CD14-positive monocyte (primary cell): ENCODE measurements at regions of chr5 and their contacts with region 1.

Region 1: DNA sequence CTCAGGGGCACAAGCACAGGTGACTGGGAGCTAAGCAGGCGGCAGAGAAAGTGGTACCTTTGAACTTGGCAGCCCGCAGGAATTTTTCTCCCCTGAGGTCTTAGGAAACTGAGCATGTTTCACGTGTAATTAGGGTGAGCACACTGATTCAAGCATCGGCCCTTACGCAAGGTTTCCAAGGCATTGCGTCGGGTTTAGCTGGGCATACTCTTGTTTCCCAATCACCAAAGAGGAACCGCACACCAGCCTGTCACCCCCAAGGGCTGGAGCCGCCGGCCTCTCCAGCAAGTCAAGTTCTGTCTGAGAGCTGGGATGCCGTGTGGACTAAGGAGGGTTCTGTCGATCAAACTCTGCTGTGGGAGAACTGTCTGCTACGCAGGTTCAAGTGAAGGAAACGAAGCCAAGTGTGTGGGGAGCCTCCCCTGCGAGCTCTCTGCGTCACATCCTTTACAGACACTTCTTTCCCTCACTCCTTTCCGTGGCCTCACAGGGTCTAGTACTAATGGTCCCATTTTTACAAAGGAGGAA is 53.0 kb downstream of the ERGIC1 start:
- DNase-seq: peak; percentile 98 to 100 (median 100)
- H3K4me3 ChIP-seq: peak overlapping the region in 1 of 3 experiments; percentile 22
- H3K4me3 Mint-ChIP-seq: peak overlapping the region; percentile 67 to 73
- H3K27ac ChIP-seq: peak overlapping the region; percentile 98 to 100
- H3K27ac Mint-ChIP-seq: peak overlapping the region; percentile 99 to 100 (median 100)
- H3K4me1 ChIP-seq: peaks cover 53 to 54% of the 10 kb centered on the region in 2 donors
- H3K4me1 Mint-ChIP-seq: peaks cover 57% of the 10 kb centered on the region
- H3K27me3 ChIP-seq: no peaks in the 10 kb centered on the region
- H3K27me3 Mint-ChIP-seq: peaks cover 0 to 7% (median 2%) of the 10 kb centered on the region in 3 donors
- CTCF ChIP-seq: no peak

Region 2: GRCh38 chr5:172764849-172765765 is 121.9 kb before region 1 on chr5:
- intact Hi-C with region 1: loop called (anchors 2 kb)
- DNase-seq: peak; percentile 100
- H3K4me3 ChIP-seq: peak overlapping the region; percentile 34 to 95 (median 42)
- H3K4me3 Mint-ChIP-seq: peak overlapping the region; percentile 94 to 100
- H3K27ac ChIP-seq: peak overlapping the region; percentile 89 to 100
- H3K27ac Mint-ChIP-seq: peak overlapping the region; percentile 94 to 99 (median 98)
- H3K4me1 ChIP-seq: peaks cover 38 to 44% of the 10 kb centered on the region in 2 donors
- H3K4me1 Mint-ChIP-seq: peaks cover 41% of the 10 kb centered on the region
- H3K27me3 ChIP-seq: no peaks in the 10 kb centered on the region
- H3K27me3 Mint-ChIP-seq: peaks cover 3 to 28% (median 14%) of the 10 kb centered on the region in 3 donors
- CTCF ChIP-seq: no peak

Region 3: DNA sequence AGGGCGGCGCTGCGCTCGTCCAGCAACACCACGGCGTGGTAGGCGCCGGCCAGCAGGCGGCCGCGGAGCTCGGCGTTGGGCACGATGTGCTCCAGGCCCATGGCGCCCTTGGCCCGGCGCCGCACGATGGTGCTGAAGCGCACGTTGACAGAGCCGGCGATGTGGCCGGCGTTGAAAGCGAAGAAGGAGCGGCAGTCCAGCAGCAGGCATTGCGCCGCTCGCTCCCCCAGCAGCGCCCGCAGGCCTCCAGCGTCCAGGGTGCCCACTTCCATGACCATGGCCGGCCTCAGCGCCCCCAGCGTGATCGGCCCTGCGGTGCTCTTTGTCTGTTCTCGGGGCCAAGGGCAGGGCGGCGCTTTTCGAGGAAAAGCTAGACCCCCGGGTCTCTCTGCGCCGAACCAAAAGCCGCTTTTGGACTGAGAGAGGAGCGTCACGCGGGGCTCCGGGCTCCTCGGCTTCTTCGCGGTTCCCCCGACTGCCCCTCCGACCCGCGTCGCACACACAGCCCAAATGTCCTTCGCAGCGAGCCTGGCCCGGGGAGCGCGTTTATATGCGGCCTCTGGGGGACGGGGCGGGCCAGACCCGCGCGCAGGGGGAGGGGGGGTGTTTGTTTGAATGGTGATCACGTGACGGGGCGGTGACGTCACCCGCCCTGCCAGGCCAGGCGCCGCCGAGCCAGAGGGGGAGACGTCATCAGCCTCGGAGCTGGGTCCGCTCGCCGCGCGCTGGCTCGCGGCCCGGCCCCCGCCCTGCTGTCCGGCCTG is 116.2 kb before region 1 on chr5 and contains the start of gene DUSP1:
- intact Hi-C with region 1: loop called (anchors 2 kb)
- DNase-seq: peak; percentile 98 to 99 (median 99)
- H3K4me3 ChIP-seq: peak within 1 kb of the TSS; percentile 95 to 99 (median 95)
- H3K4me3 Mint-ChIP-seq: peak within 1 kb of the TSS; percentile 94 to 100
- H3K27ac ChIP-seq: peak within 1 kb of the TSS; percentile 100
- H3K27ac Mint-ChIP-seq: peak within 1 kb of the TSS; percentile 99 to 100 (median 100)
- H3K4me1 ChIP-seq: peaks cover 60 to 63% of the 10 kb centered on the region in 2 donors
- H3K4me1 Mint-ChIP-seq: peaks cover 53% of the 10 kb centered on the region
- H3K27me3 ChIP-seq: no peaks in the 10 kb centered on the region
- H3K27me3 Mint-ChIP-seq: peaks cover 4 to 34% (median 12%) of the 10 kb centered on the region in 3 donors
- CTCF ChIP-seq: no peak
- polyA plus RNA-seq, gene DUSP1: 1,963 to 4,884 (median 3,954) TPM

Region 4: DNA sequence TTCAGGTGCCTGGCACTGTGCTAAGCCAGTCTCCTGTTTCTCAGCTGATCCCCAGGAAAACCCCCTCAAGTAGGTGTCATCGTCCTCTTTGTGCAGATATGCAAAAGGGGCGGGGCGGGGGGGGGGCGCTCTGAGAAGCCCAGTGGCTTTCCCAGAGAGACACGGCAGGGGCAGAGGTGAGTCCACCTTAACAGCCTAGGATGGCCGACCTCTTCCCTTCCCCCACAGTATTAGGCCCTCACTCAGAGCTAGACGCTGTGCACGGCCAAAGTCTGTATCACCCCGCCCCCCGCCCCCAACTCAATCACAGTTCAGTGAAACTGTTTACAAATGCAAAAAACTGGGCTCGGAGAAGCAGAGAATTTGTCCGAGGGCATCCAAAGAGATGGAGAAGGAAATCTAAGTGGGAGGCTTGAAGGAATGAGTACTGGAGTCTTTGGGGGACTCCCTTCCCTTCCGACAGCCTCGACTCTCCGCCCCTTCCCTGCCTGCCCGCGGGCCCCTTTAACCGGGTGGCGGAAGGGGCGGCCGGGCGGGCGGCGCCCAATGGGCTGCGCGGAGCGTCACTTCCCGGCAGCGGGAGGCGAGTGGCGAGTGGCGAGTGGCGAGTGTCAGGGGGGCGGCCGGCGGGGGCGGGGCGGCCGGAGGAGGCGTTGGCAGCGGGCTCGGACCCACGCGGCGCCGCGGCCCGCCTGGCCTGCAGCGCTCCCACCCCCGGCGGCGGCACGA is 53.2 kb before region 1 on chr5 and contains the start of gene ERGIC1:
- intact Hi-C with region 1: loop called in 1 of 2 experiments (anchors 2 kb)
- DNase-seq: peak; percentile 70 to 78 (median 77)
- H3K4me3 ChIP-seq: peak within 1 kb of the TSS; percentile 69 to 84 (median 75)
- H3K4me3 Mint-ChIP-seq: peak within 1 kb of the TSS; percentile 85 to 91
- H3K27ac ChIP-seq: peak within 1 kb of the TSS; percentile 53 to 91
- H3K27ac Mint-ChIP-seq: peak within 1 kb of the TSS; percentile 86 to 96 (median 94)
- H3K4me1 ChIP-seq: peaks cover 51 to 74% of the 10 kb centered on the region in 2 donors
- H3K4me1 Mint-ChIP-seq: peaks cover 62% of the 10 kb centered on the region
- H3K27me3 ChIP-seq: no peaks in the 10 kb centered on the region
- H3K27me3 Mint-ChIP-seq: peaks cover 0 to 2% (median 1%) of the 10 kb centered on the region in 3 donors
- CTCF ChIP-seq: no peak
- polyA plus RNA-seq, gene ERGIC1: 28.3 to 76.2 (median 34.1) TPM

Region 5: DNA sequence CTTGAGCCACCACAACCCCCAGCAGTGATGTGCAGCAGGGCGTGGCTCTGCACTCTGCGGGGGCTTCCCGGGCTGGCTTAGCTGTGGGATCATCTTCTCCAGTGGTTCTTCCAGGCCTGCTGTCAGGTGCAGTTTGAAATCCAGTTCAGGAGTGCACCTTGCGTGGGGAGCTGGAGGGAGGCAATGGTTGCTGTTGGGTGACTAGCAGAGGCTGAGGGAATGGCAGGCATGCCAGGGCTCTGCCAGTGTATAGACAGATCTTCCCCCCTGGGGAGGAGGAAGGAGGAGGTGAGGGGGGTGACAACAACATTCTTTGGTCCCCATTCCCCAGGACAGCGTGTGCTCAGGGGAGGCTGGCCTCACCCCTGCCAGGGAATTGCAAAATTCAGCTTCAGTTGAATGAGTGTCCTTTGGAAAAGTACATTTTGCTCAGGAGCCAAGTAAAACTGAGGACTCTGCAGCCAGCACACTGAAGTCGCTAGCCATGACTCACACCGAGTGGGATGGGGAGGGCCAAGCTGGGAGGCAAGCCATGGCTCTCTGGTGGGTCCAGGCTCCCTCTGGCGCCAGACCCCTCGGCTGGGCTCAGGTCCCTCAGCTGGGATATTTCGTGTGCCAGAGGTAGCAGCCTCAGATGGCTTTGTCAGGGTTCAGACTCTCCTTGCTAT is 18.0 kb before region 1 on chr5:
- intact Hi-C with region 1: no loop called
- DNase-seq: peak in 2 of 3 donors; percentile 35 to 68
- H3K4me3 ChIP-seq: no peak overlapping the region
- H3K4me3 Mint-ChIP-seq: no peak overlapping the region
- H3K27ac ChIP-seq: no peak overlapping the region
- H3K27ac Mint-ChIP-seq: peak overlapping the region in 1 of 7 donors; percentile 75
- H3K4me1 ChIP-seq: peaks cover 14 to 28% of the 10 kb centered on the region in 2 donors
- H3K4me1 Mint-ChIP-seq: peaks cover 12% of the 10 kb centered on the region
- H3K27me3 ChIP-seq: peaks cover 0 to 3% of the 10 kb centered on the region in 2 donors
- H3K27me3 Mint-ChIP-seq: peaks cover 6 to 13% (median 9%) of the 10 kb centered on the region in 3 donors
- CTCF ChIP-seq: no peak

Region 6: GRCh38 chr5:172932313-172933017 is 45.4 kb after region 1 on chr5:
- intact Hi-C with region 1: loop called in 1 of 2 experiments (anchors 5 kb)
- DNase-seq: peak; percentile 61 to 73 (median 66)
- H3K4me3 ChIP-seq: no peak overlapping the region
- H3K4me3 Mint-ChIP-seq: no peak overlapping the region
- H3K27ac ChIP-seq: no peak overlapping the region
- H3K27ac Mint-ChIP-seq: peak overlapping the region in 4 of 7 donors; percentile 15 to 82 (median 54)
- H3K4me1 ChIP-seq: no peaks in the 10 kb centered on the region
- H3K4me1 Mint-ChIP-seq: peaks cover 13% of the 10 kb centered on the region
- H3K27me3 ChIP-seq: no peaks in the 10 kb centered on the region
- H3K27me3 Mint-ChIP-seq: peaks cover 0 to 2% (median 1%) of the 10 kb centered on the region in 3 donors
- CTCF ChIP-seq: peak; percentile 97